ENCODE measurements at regions of chr5 and their contacts with region 1.

Region 1: GRCh38 chr5:76601470-76601869 is 21.7 kb downstream of the F2RL2 start:
- DNase-seq: peak in 7 of 9 donors; percentile 7 to 60 (median 48)
- ATAC-seq: peak; percentile 80
- H3K4me3 ChIP-seq: no peak overlapping the region
- H3K4me3 Mint-ChIP-seq: no peak overlapping the region
- H3K27ac ChIP-seq: no peak overlapping the region
- H3K27ac Mint-ChIP-seq: peak overlapping the region in 3 of 9 donors; percentile 6 to 54 (median 36)
- H3K4me1 ChIP-seq: no peaks in the 10 kb centered on the region
- H3K4me1 Mint-ChIP-seq: peaks cover 0 to 11% (median 2%) of the 10 kb centered on the region in 7 donors
- H3K27me3 ChIP-seq: no peaks in the 10 kb centered on the region
- H3K27me3 Mint-ChIP-seq: no peaks in the 10 kb centered on the region

Region 2: DNA sequence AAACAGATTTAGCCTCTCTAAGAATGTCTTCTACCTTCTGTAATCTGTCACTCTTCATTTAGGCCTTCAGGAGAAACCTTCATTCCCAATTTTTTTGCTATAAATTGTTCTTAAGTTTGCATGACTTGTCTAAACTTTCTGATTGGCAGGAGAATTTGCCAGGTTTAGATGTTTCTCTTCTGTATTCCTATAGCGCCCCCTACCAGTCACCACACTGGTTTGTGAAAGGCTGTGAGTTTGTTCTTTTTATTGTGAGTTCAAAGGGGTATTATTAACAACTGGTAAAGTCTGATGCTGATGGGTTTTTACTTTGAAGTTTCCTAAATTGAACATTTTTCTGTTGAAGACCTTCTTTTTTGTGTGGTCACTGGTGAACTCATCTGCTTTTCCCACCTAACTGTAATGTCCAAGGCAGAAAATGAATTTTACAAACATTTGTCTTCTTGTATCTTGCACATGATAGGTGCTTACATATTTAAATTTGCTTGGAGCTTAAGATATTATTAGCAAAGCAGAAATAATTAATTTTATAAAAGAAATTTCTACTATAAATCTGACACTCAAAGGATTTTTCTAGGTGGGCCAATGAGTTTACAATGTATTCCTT is 40.1 kb after region 1 on chr5:
- CTCF ChIA-PET with region 1: interaction called, 5 read pairs
- POLR2A ChIA-PET with region 1: no interaction called
- intact Hi-C with region 1: loop called (anchors 1 kb)
- DNase-seq: peak; percentile 13 to 71 (median 55)
- ATAC-seq: peak; percentile 78
- H3K4me3 ChIP-seq: no peak overlapping the region
- H3K4me3 Mint-ChIP-seq: no peak overlapping the region
- H3K27ac ChIP-seq: no peak overlapping the region
- H3K27ac Mint-ChIP-seq: no peak overlapping the region
- H3K4me1 ChIP-seq: no peaks in the 10 kb centered on the region
- H3K4me1 Mint-ChIP-seq: peaks cover 0 to 13% (median 0%) of the 10 kb centered on the region in 7 donors
- H3K27me3 ChIP-seq: no peaks in the 10 kb centered on the region
- H3K27me3 Mint-ChIP-seq: no peaks in the 10 kb centered on the region

Region 3: DNA sequence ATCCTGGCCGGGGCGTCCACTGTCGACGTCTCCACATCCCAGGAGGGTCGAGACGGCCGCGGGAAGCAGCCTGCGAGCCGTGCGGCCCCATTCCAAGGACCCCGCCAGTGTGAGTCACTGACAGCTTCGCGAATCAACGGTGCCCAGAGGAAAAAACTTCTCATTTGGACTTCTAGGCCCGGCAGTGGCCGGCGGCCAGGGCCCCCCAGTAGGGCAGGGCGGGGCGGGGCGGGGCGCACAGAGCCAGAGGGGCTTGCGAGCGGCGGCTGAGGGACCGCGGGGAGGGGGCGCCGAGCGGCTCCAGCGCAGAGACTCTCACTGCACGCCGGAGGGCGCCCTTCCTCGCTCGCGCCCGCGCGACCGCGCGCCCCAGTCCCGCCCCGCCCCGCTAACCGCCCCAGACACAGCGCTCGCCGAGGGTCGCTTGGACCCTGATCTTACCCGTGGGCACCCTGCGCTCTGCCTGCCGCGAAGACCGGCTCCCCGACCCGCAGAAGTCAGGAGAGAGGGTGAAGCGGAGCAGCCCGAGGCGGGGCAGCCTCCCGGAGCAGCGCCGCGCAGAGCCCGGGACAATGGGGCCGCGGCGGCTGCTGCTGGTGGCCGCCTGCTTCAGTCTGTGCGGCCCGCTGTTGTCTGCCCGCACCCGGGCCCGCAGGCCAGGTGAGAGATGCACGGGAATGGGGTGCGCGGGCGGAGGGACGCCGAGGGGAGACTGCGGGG is 114.4 kb after region 1 on chr5 and contains the start of gene F2R:
- CTCF ChIA-PET with region 1: no interaction called
- POLR2A ChIA-PET with region 1: no interaction called
- intact Hi-C with region 1: loop called in 1 of 2 experiments (anchors 5 kb)
- DNase-seq: peak in 8 of 9 donors; percentile 17 to 56 (median 21)
- ATAC-seq: peak; percentile 90
- H3K4me3 ChIP-seq: peak within 1 kb of the TSS; percentile 82
- H3K4me3 Mint-ChIP-seq: peak within 1 kb of the TSS; percentile 48 to 88 (median 82)
- H3K27ac ChIP-seq: no peak within 1 kb of the TSS
- H3K27ac Mint-ChIP-seq: peak within 1 kb of the TSS in 3 of 9 donors; percentile 11 to 79 (median 71)
- H3K4me1 ChIP-seq: peaks cover 16 to 17% of the 10 kb centered on the region in 2 donors
- H3K4me1 Mint-ChIP-seq: peaks cover 11 to 36% (median 27%) of the 10 kb centered on the region in 7 donors
- H3K27me3 ChIP-seq: peaks cover 0 to 17% of the 10 kb centered on the region in 2 donors
- H3K27me3 Mint-ChIP-seq: peaks cover 35 to 42% (median 40%) of the 10 kb centered on the region in 5 donors
- total RNA-seq, gene F2R: 0.65 to 8.2 (median 1.2) TPM

Region 4: DNA sequence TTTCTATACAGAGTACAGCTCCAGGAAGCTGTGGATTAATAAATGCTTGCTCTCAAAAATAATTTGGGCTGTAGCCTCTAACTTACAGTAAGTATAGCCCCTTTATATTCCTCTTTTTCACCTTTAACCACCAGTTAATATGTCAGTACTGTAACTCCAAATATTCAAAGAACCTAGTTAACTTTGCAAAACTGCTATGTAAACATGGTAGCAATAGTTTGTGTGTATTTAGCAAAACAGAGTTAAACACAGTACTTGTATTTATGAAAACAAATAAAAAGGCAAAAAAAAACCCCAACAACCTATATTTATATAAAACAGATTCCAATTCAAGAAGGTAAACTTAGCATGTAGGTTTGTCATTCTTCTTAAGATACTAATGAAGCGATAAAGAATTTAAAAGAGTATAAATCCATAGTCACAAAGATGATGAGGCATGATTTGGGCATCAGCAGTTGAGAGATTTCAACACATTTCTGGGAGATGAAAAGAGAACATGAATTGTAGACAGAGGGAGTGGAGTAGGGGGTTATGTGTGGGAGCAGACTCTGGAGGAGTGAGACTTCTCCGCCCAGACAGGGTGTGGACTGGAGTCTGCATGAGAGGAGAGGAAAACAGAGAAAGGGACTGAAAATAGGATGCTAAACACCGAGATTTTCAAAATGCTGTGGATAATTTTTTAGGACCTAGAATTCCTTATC is 170.4 kb after region 1 on chr5:
- CTCF ChIA-PET with region 1: interaction called, 28 read pairs
- POLR2A ChIA-PET with region 1: no interaction called
- intact Hi-C with region 1: loop called (anchors 1 kb)
- DNase-seq: no peak
- ATAC-seq: no peak
- H3K4me3 ChIP-seq: no peak overlapping the region
- H3K4me3 Mint-ChIP-seq: no peak overlapping the region
- H3K27ac ChIP-seq: no peak overlapping the region
- H3K27ac Mint-ChIP-seq: peak overlapping the region in 2 of 9 donors; percentile 6 to 32
- H3K4me1 ChIP-seq: no peaks in the 10 kb centered on the region
- H3K4me1 Mint-ChIP-seq: peaks cover 0 to 7% (median 3%) of the 10 kb centered on the region in 7 donors
- H3K27me3 ChIP-seq: no peaks in the 10 kb centered on the region
- H3K27me3 Mint-ChIP-seq: peaks cover 0 to 4% (median 0%) of the 10 kb centered on the region in 5 donors

Region 5: DNA sequence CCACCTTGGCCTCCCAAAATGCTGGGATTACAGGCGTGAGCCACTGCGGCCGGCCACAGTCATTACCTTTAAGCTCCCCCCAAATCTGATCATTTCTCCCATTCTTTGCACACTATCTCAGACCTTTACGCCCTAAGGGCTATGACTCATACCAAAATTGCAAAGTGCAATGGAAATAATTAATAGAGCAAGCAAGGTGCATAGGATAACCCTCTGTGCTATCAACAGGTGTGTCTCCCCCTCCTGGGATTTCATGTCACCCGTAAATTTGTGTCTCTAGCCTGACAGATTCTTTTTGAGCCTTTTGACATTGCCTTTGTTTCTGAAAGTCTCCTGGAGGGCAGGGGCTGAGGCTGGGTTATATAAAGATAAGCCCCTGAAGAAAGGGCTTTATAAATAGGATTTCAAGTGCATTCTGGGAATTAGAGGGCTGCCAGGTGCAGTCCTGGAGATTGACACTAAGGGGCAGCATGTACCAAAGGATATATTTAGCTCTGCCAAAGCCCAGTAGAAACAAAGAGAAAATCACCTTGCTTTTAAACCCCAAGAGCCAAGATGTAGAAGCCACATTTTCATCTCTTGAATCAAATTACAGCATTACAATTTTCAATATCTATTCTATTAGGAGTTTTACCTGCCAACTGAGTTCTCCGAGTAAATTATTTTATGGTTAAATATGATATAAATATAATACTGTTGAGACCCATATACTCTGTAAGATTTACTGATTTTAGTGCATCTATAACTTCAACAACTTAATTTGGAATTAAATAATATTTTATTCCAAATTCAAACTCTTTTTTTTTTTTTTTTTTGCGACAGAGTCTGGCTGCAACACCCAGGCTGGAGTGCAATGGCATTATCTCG is 266.6 kb after region 1 on chr5:
- CTCF ChIA-PET with region 1: no interaction called
- POLR2A ChIA-PET with region 1: no interaction called
- intact Hi-C with region 1: loop called (anchors 1 to 10 kb)
- DNase-seq: peak; percentile 14 to 63 (median 53)
- ATAC-seq: peak; percentile 90
- H3K4me3 ChIP-seq: no peak overlapping the region
- H3K4me3 Mint-ChIP-seq: no peak overlapping the region
- H3K27ac ChIP-seq: no peak overlapping the region
- H3K27ac Mint-ChIP-seq: no peak overlapping the region
- H3K4me1 ChIP-seq: no peaks in the 10 kb centered on the region
- H3K4me1 Mint-ChIP-seq: peaks cover 0 to 4% (median 0%) of the 10 kb centered on the region in 7 donors
- H3K27me3 ChIP-seq: no peaks in the 10 kb centered on the region
- H3K27me3 Mint-ChIP-seq: no peaks in the 10 kb centered on the region

Region 6: GRCh38 chr5:77015938-77016569 is 414.6 kb after region 1 on chr5:
- CTCF ChIA-PET with region 1: interaction called, 3 read pairs
- POLR2A ChIA-PET with region 1: no interaction called
- intact Hi-C with region 1: loop called in 1 of 2 experiments (anchors 5 kb)
- DNase-seq: peak in 5 of 9 donors; percentile 2 to 21 (median 8)
- ATAC-seq: no peak
- H3K4me3 ChIP-seq: no peak overlapping the region
- H3K4me3 Mint-ChIP-seq: no peak overlapping the region
- H3K27ac ChIP-seq: no peak overlapping the region
- H3K27ac Mint-ChIP-seq: no peak overlapping the region
- H3K4me1 ChIP-seq: no peaks in the 10 kb centered on the region
- H3K4me1 Mint-ChIP-seq: peaks cover 0 to 13% (median 0%) of the 10 kb centered on the region in 7 donors
- H3K27me3 ChIP-seq: no peaks in the 10 kb centered on the region
- H3K27me3 Mint-ChIP-seq: peaks cover 13 to 43% (median 23%) of the 10 kb centered on the region in 5 donors